SK-N-SH (cell line): ENCODE measurements at regions of chr11 and their contacts with region 1.

Region 1: DNA sequence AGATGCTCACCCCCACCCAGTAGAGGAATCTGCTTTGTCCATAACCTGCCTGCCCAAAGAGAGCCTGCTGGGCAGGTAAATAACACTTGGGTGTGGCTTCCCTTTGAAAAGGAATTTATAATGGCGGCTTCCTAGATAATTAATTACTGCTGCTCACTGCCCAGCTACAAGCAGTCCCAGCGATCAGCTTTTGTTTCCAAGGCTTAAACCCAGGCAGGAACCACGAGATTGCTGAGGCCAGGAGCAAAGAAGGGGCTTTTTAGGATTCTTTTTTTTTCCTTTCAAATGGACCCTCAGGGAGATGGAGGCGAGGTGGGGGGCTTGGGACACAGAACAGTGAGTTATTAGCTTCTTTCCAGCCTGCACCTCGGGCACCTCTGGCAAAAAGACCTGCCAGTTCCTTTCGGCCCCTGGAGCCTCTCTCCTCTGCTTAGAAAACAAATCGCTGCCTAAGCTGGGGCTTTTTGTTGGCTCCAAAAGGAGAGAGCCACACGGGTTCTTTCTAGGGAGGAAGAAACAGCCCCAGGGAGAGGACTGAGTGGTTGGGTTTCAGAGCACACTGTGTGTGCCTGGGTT is 107.2 kb downstream of the TSPAN18 start:
- DNase-seq: peak; percentile 45
- H3K4me3 ChIP-seq: no peak overlapping the region
- H3K27ac ChIP-seq: peak overlapping the region in 1 of 2 experiments; percentile 79; a peak in 2 of 4 replicates
- H3K4me1 ChIP-seq: peaks cover 0 to 41% of the 10 kb centered on the region in 2 experiments; a peak in 2 of 4 replicates
- H3K27me3 ChIP-seq: no peaks in the 10 kb centered on the region
- CTCF ChIP-seq: no peak
- EP300 ChIP-seq: no peak
- RAD21 ChIP-seq: no peak

Region 2: GRCh38 chr11:44823006-44823405 is 11.0 kb before region 1 on chr11:
- CTCF ChIA-PET with region 1: interaction called, 11 read pairs
- POLR2A ChIA-PET with region 1: no interaction called
- DNase-seq: no peak
- H3K4me3 ChIP-seq: no peak overlapping the region
- H3K27ac ChIP-seq: no peak overlapping the region; a peak in 1 of 4 replicates
- H3K4me1 ChIP-seq: peaks cover 0 to 25% of the 10 kb centered on the region in 2 experiments; a peak in 1 of 4 replicates
- H3K27me3 ChIP-seq: no peaks in the 10 kb centered on the region
- CTCF ChIP-seq: peak; percentile 41
- EP300 ChIP-seq: no peak
- RAD21 ChIP-seq: no peak